Activated CD8-positive, alpha-beta T cell treated with anti-CD3 and anti-CD28 coated beads for 36 hours (primary cell): ENCODE measurements at regions of chr11 and their contacts with region 1.

Region 1: GRCh38 chr11:14358729-14359439 is at the start of gene RRAS2:
- DNase-seq: peak; percentile 86
- ATAC-seq: peak; percentile 91
- H3K4me3 Mint-ChIP-seq: peak within 1 kb of the TSS; percentile 93
- H3K27ac Mint-ChIP-seq: peak within 1 kb of the TSS; percentile 92
- H3K4me1 Mint-ChIP-seq: peaks cover 33% of the 10 kb centered on the region
- H3K27me3 Mint-ChIP-seq: no peaks in the 10 kb centered on the region
- CTCF ChIP-seq: no peak
- total RNA-seq, gene RRAS2: 87.9 to 92.0 TPM

Region 2: DNA sequence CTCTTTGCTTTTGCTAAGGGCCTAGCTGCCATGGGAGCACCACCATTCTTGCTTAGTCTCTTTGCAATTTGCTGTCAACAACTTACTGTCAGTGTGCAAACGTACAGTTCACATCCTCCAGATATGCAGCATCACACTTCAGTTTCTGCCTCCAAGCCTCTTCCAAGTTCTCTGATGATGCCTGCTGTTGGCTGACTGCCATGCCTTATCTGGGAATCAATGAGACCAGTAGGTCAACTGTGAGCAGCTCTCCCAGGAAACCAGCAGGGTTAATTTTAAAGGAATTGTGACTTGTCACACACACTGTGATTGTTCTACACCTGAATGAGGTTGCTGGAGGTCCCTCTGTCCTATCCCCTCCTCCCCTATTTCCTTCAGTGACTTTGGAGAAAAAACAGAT is 84.8 kb after region 1 on chr11:
- CTCF ChIA-PET with region 1: no interaction called
- POLR2A ChIA-PET with region 1: no interaction called
- intact Hi-C with region 1: loop called (anchors 10 kb)
- DNase-seq: no peak
- ATAC-seq: no peak
- H3K4me3 Mint-ChIP-seq: no peak overlapping the region
- H3K27ac Mint-ChIP-seq: no peak overlapping the region
- H3K4me1 Mint-ChIP-seq: peaks cover 56% of the 10 kb centered on the region
- H3K27me3 Mint-ChIP-seq: no peaks in the 10 kb centered on the region
- CTCF ChIP-seq: no peak